ENCODE measurements at regions of chrX and their contacts with region 1.

Region 1: GRCh38 chrX:73799888-73800287 is 236.9 kb downstream of the CHIC1 start:
- DNase-seq: no peak
- ATAC-seq: no peak
- H3K4me3 ChIP-seq: no peak overlapping the region
- H3K27ac ChIP-seq: no peak overlapping the region
- H3K4me1 ChIP-seq: no peaks in the 10 kb centered on the region
- H3K27me3 ChIP-seq: no peaks in the 10 kb centered on the region
- CTCF ChIP-seq: no peak
- POLR2A ChIP-seq: no peak
- RAD21 ChIP-seq: no peak

Region 2: GRCh38 chrX:73728602-73729001 is 71.3 kb before region 1 on chrX:
- CTCF ChIA-PET with region 1: no interaction called
- POLR2A ChIA-PET with region 1: no interaction called
- RAD21 ChIA-PET with region 1: no interaction called
- intact Hi-C with region 1: loop called (anchors 10 kb)
- DNase-seq: no peak
- ATAC-seq: no peak
- H3K4me3 ChIP-seq: no peak overlapping the region
- H3K27ac ChIP-seq: no peak overlapping the region
- H3K4me1 ChIP-seq: no peaks in the 10 kb centered on the region
- H3K27me3 ChIP-seq: no peaks in the 10 kb centered on the region
- CTCF ChIP-seq: no peak
- POLR2A ChIP-seq: no peak
- RAD21 ChIP-seq: no peak

Region 3: DNA sequence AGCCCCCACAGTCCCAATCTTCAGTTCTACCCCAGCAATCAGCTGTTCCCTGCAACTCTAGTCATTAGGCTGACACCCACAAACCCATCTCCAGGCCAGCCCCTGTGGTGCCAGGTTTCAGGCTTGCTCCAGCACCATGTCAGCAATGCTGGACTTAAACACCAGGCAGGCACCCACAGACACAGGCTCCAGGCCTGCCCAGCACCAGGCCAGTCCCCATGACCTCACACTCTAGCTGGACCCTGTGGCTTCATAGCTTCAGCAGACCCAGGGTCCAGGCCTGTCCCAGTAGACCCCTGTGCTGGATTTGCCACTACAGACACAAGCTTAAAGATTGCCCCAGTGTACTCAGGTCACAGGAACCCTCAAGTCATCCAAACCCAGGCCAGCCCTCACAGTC is 63.4 kb after region 1 on chrX:
- CTCF ChIA-PET with region 1: no interaction called
- POLR2A ChIA-PET with region 1: no interaction called
- RAD21 ChIA-PET with region 1: no interaction called
- intact Hi-C with region 1: no loop called
- DNase-seq: no peak
- ATAC-seq: no peak
- H3K4me3 ChIP-seq: no peak overlapping the region
- H3K27ac ChIP-seq: no peak overlapping the region
- H3K4me1 ChIP-seq: no peaks in the 10 kb centered on the region
- H3K27me3 ChIP-seq: no peaks in the 10 kb centered on the region
- CTCF ChIP-seq: no peak
- POLR2A ChIP-seq: no peak
- RAD21 ChIP-seq: no peak

Measured in HCT116 (cell line).